Left cardiac atrium (tissue), 4 donors: ENCODE measurements at regions of chr6 and their contacts with region 1.

Region 1: GRCh38 chr6:28838634-28839442 is 84.9 kb downstream of the TRIM27 start:
- DNase-seq: peak; percentile 87
- ATAC-seq: peak; percentile 90 to 93

Region 2: DNA sequence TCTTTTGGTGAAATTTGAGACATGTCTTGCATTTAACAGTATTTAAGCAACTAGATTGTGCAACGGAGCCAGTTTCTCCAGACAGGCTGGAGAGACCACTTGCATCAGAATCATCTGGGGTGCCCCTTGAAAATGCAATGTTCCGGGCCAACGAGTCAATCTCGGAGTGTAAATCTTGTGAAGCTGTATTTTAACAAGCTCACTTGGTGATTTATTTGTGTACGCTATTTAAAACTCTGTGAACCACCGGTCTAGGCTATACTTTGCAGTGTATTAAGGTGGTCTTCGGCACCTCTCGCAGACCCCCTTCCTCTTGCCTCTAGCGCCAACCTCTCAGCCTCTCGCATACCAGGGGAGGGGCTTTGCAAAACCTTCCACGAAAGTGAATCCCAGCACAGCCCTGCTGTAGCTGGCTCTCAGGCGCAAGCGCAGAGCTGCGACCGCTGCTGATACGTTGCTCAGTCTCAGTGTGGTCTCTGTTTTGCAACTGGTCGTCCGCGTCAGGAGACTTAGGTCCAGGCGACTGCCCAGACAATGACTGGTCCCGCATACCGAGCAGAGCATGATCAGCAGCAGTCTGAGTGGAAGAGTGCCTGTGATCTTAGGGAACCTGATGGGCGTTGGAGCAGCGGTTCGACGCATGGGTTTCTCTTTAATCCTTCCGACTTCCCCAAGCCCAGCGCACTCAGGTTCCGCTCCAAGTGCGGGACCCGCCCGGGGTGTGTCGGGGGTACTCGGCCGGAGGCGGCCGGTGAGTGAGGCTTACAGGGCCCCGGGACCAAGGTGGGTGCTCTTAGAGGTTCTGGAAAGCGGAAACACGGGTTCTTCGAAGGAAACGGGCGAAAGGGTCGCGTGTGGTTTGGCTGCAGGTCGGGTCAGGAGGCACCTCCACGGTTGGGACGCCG is 1450.3 kb before region 1 on chr6 and contains the start of gene ZNF391:
- intact Hi-C with region 1: no loop called
- DNase-seq: peak; percentile 82
- ATAC-seq: peak; percentile 93 to 97
- total RNA-seq, gene ZNF391: 1.9 to 2.6 TPM

Region 3: GRCh38 chr6:28474441-28475219 is 364.2 kb before region 1 on chr6:
- intact Hi-C with region 1: no loop called
- DNase-seq: no peak
- ATAC-seq: peak; percentile 41 to 53

Region 4: DNA sequence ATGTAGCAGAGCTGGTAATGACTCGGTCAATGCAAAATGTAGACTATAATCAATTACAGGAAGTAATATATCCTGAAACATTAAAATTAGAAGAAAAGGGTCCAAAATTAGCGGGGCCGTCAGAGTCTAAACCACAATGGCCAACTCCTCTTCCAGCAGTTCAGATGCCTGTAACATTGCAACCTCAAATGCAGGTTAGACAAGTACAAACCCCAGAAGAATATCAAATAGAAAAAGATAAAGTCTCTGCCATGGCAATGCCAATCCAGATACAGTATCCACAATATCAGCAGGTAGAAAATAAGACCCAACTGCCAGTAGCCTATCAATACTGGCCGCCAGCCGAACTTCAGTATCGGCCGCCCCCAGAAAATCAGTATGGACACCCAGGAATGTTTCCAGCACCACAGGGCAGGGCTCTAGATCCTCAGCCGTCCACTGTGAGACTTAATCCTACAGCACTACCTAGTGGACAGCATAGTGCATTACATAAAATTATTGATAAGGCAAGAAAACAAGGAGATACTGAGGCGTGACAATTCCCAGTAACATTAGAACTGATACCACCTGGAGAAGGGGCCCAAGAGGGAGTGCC is 154.8 kb before region 1 on chr6:
- intact Hi-C with region 1: loop called in 1 of 2 experiments (anchors 10 kb)
- DNase-seq: peak; percentile 34
- ATAC-seq: peak in 1 of 2 donors; percentile 34

Region 5: DNA sequence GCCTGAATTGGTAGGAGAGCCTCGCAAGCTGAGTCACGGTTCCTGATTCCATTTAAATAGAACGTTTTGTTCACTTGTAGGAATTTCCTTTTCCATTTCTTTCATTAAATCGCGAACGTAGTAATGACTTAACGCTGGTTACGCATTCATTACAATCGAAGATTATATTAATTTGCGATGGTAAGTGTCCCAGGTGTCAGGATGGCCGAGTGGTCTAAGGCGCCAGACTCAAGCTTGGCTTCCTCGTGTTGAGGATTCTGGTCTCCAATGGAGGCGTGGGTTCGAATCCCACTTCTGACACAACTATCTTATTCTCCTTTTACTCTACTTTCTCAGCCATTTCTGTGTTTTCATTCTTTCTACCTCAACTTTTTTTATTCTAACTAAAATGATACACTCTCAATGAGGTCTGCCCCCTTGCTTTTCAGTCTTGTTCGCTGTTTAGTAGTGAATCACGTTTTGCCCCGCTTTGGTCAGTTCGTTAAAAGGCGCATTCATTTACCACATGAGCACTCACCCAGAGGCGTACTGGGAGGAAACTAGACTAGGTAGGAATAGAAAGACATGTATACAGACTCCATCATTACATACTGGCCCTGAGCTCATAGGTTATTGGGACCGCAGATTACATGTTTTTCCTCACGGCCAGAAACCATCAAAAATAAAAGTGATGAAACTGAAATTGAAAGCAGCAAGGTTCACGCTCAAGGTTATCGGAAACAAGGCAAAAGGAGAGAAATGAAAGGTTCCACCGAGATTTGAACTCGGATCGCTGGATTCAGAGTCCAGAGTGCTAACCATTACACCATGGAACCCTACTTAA is 102.2 kb after region 1 on chr6:
- intact Hi-C with region 1: loop called in 1 of 2 experiments (anchors 5 kb)
- DNase-seq: peak; percentile 77
- ATAC-seq: peak; percentile 75 to 93

Region 6: GRCh38 chr6:29011276-29011734 is 172.5 kb after region 1 on chr6:
- intact Hi-C with region 1: loop called (anchors 2 to 5 kb)
- DNase-seq: peak; percentile 60
- ATAC-seq: peak; percentile 78 to 90

Region 7: GRCh38 chr6:29589423-29590048 is 750.7 kb after region 1 on chr6:
- intact Hi-C with region 1: loop called in 1 of 2 experiments (anchors 5 kb)
- DNase-seq: no peak
- ATAC-seq: peak in 1 of 2 donors; percentile 51